Psoas muscle (tissue), 8 donors: ENCODE measurements at regions of chr15 and their contacts with region 1.

Region 1: GRCh38 chr15:38283010-38283409 is 30.4 kb downstream of the SPRED1 start:
- DNase-seq: no peak
- ATAC-seq: no peak
- H3K4me3 ChIP-seq: no peak overlapping the region
- H3K27ac ChIP-seq: no peak overlapping the region
- H3K4me1 ChIP-seq: no peaks in the 10 kb centered on the region
- H3K27me3 ChIP-seq: no peaks in the 10 kb centered on the region
- CTCF ChIP-seq: no peak

Region 2: DNA sequence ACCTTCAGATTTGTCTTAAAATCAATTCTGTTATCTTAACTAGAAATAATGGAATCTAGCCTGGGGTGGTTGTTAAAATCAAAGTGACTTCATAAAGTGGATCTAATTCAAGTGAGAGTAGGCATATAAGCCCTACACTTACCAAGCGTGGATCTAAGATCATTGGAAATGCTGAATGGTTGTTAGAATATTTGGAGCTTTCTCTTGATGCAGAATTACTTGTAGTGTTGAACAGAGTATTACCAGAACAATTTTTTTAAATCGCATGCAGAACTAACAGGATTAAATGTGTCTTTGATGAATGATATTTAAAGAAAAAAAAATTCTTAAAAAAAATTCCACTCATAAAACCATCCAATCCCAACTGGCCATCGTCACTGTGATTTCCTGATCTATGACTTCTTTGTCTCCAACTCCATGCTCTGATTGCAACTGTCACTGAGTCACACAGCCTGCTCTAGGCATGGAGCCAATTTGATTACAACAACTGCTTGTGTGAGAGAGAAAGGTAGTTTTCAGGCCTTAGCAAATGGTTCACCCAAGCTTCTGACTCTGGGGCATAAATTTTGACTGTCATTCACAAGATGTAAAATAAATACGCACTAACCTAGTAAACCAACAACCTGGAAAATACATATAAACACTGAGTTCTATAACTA is 56.3 kb before region 1 on chr15:
- intact Hi-C with region 1: loop called in 1 of 2 experiments (anchors 10 kb)
- DNase-seq: no peak
- ATAC-seq: peak in 2 of 4 donors; percentile 40 to 53
- H3K4me3 ChIP-seq: no peak overlapping the region
- H3K27ac ChIP-seq: no peak overlapping the region
- H3K4me1 ChIP-seq: no peaks in the 10 kb centered on the region
- H3K27me3 ChIP-seq: no peaks in the 10 kb centered on the region
- CTCF ChIP-seq: no peak

Region 3: DNA sequence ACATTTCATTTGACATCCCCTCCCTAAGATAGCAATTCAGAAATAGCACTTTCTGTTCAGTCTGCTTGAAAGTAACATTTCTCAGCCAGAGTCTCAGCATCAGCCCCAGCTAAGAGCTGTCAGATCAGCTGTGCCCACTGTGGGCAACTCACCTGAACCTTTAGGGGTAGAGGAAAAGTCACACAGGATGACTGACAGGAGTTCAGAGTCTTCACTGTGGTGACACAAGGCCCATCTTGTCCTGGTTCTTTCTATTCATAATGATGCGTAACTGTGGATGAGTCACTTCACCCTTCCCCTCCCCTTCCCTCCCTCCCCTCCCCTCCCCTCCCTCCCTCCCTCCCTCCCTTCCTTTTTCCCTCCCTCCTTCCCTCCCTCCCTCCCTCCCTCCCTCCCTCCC is 377.7 kb after region 1 on chr15:
- intact Hi-C with region 1: no loop called
- DNase-seq: no peak
- ATAC-seq: no peak
- H3K4me3 ChIP-seq: no peak overlapping the region
- H3K27ac ChIP-seq: no peak overlapping the region
- H3K4me1 ChIP-seq: no peaks in the 10 kb centered on the region
- H3K27me3 ChIP-seq: peaks cover 0 to 3% (median 3%) of the 10 kb centered on the region in 3 donors
- CTCF ChIP-seq: no peak